Heart right ventricle (tissue), 16 donors: ENCODE measurements at regions of chr6 and their contacts with region 1.

Region 1: GRCh38 chr6:43369174-43370022 is at the start of gene ZNF318:
- DNase-seq: peak; percentile 96
- ATAC-seq: peak; percentile 98 to 100 (median 99)
- H3K4me3 ChIP-seq: peak within 1 kb of the TSS; percentile 56 to 94 (median 82)
- H3K27ac ChIP-seq: peak within 1 kb of the TSS; percentile 69 to 96 (median 87)
- H3K4me1 ChIP-seq: peaks cover 0 to 35% (median 23%) of the 10 kb centered on the region in 9 donors
- H3K27me3 ChIP-seq: no peaks in the 10 kb centered on the region
- CTCF ChIP-seq: no peak
- total RNA-seq, gene ZNF318: 9.3 to 20.4 (median 14.0) TPM

Region 2: GRCh38 chr6:43174263-43175112 is 194.9 kb before region 1 on chr6:
- intact Hi-C with region 1: loop called in 1 of 10 experiments (anchors 5 kb)
- DNase-seq: peak; percentile 89 to 98
- ATAC-seq: peak; percentile 67 to 89 (median 83)
- H3K4me3 ChIP-seq: peak overlapping the region in 9 of 10 donors; percentile 37 to 99 (median 97)
- H3K27ac ChIP-seq: peak overlapping the region; percentile 85 to 99 (median 98)
- H3K4me1 ChIP-seq: peaks cover 19 to 51% (median 34%) of the 10 kb centered on the region in 9 donors
- H3K27me3 ChIP-seq: no peaks in the 10 kb centered on the region
- CTCF ChIP-seq: peak in 6 of 9 donors; percentile 16 to 49 (median 30)

Region 3: DNA sequence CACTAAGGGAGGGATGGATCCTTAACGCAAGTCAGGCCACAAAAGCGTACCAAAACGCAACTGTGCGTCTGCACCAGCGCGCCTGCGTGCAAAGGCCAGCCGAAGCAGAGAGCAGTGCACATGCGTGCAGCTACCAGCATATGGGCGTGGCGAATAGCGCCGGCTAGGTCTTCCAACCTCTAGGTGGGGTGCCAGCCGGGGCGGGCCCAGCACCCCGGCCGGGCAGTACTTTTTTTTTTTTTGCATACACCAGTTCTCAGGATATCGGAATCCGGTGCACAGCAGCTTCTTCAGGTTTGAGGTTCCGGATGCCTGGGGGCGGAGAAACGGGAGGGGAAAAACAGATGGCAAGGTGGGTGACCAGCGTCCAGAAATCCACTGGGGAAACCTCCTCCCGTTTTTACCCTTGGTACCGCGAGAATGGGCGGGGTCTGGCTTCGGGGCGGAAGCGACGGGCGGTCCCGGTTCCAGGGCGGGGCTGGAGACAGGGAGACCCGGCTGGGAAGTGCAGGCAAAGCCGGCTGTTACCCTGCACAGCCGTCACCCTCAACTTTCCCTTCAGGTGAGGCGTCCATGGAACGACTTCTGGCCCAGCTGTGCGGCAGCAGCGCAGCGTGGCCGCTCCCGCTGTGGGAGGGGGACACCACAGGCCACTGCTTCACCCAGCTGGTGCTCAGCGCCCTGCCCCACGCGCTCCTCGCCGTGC is 58.2 kb after region 1 on chr6 and contains the start of gene ABCC10:
- intact Hi-C with region 1: loop called in 3 of 10 experiments (anchors 2 to 5 kb)
- DNase-seq: peak; percentile 95 to 96
- ATAC-seq: peak; percentile 98 to 100 (median 98)
- H3K4me3 ChIP-seq: peak within 1 kb of the TSS; percentile 63 to 85 (median 77)
- H3K27ac ChIP-seq: peak within 1 kb of the TSS; percentile 53 to 93 (median 88)
- H3K4me1 ChIP-seq: peaks cover 5 to 26% (median 17%) of the 10 kb centered on the region in 9 donors
- H3K27me3 ChIP-seq: no peaks in the 10 kb centered on the region
- CTCF ChIP-seq: peak; percentile 15 to 74 (median 48)
- total RNA-seq, gene ABCC10: 7.8 to 16.8 (median 10.9) TPM

Region 4: DNA sequence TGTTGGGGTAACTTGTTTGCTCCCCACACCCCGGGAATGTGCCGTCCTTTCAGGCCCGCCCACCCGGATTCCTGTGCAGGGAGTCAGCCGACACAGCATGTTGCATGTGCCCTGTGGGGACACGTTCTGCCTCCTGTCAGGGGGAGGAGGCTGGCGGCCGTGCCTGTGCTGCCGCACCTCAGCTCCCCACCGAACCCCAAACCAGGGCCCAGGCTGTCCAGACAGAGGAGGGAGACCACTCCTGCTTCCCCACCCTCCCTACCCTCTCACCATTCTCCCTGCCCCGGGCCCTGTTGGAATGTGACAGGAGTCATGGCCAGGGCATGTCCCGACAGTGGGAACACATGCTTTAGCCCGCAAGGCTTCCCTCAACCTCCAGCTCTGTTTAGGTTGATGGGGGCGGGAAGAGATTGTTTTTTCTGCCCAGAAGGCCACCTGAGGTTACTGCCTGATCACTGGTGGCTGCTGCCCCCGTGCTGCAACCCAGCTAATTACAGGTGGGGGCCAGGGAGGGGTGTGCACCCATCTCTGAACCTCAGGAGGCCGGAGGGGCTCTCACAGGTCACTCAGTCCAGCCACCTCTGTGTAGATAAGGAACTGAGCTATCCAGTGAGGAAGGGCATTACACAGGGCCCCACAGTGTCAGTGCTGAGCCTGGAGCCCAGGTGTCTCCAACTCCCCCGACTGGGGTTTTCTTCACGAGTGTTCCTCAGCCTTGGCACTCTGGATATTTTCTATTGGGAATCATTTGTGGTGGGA is 127.2 kb after region 1 on chr6:
- intact Hi-C with region 1: loop called in 3 of 10 experiments (anchors 5 to 10 kb)
- DNase-seq: no peak
- ATAC-seq: peak; percentile 13 to 57 (median 37)
- H3K4me3 ChIP-seq: no peak overlapping the region
- H3K27ac ChIP-seq: peak overlapping the region in 4 of 10 donors; percentile 5 to 74 (median 30)
- H3K4me1 ChIP-seq: peaks cover 0 to 85% (median 43%) of the 10 kb centered on the region in 9 donors
- H3K27me3 ChIP-seq: no peaks in the 10 kb centered on the region
- CTCF ChIP-seq: peak in 8 of 9 donors; percentile 35 to 75 (median 66)